ENCODE measurements at regions of chr20 and their contacts with region 1.

Region 1: DNA sequence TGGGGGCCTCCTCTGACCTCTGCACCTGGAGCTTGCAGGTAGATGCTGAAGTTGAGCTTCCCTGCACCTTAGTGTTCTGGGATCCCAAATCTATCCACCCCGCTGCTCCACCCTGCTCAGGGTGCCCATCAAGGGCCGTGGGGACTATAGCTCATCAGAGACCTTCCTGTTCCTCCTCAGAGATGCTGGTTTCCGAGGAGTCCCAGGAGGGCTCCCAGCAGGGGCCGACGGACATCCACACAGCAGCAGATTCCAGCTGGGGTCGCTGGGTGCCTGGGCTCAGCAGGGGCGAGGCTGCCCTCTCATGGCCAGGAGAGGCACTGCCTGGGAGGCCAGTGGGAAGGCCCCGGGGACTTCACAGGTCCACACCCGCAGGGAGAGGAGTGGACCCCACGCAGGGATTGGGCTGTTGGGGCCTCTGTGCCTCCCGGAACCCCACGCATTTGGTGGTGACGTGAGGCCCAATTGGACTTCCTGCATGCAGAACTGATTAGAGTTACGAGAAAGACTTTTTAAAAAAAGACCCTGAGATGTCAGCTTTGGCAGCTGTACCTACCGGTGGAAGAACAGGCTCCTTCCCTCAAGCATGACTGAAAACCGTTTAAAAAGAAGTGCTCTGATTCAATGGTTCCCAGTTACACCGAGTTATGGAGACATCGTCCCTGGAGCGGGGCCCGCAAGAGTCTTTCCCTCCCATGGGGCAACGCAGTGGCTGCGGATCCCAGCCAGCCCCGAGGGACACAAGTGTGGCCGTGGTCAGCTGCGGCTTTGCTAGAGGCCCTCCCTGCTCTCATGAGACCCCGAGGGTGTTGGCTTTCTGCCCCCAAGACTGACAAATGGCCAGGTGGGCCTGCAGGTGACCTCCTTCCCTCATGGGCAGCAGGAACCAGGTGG is 25.3 kb upstream of the SLCO4A1 start:
- DNase-seq: peak; percentile 92
- H3K4me3 Mint-ChIP-seq: peak overlapping the region; percentile 46
- H3K27ac Mint-ChIP-seq: peak overlapping the region; percentile 94
- H3K4me1 Mint-ChIP-seq: peaks cover 30% of the 10 kb centered on the region
- H3K27me3 Mint-ChIP-seq: peaks cover 8% of the 10 kb centered on the region

Region 2: GRCh38 chr20:62407221-62407992 is 209.6 kb before region 1 on chr20 and contains the start of gene CABLES2:
- intact Hi-C with region 1: loop called (anchors 5 kb)
- DNase-seq: peak; percentile 98
- H3K4me3 Mint-ChIP-seq: peak within 1 kb of the TSS; percentile 87
- H3K27ac Mint-ChIP-seq: peak within 1 kb of the TSS; percentile 89
- H3K4me1 Mint-ChIP-seq: peaks cover 24% of the 10 kb centered on the region
- H3K27me3 Mint-ChIP-seq: no peaks in the 10 kb centered on the region
- total RNA-seq, gene CABLES2: 13.1 and 13.5 TPM in 2 replicates

Region 3: GRCh38 chr20:62603021-62603906 is 13.7 kb before region 1 on chr20:
- intact Hi-C with region 1: loop called (anchors 1 kb)
- DNase-seq: peak; percentile 81
- H3K4me3 Mint-ChIP-seq: peak overlapping the region; percentile 79
- H3K27ac Mint-ChIP-seq: peak overlapping the region; percentile 64
- H3K4me1 Mint-ChIP-seq: peaks cover 27% of the 10 kb centered on the region
- H3K27me3 Mint-ChIP-seq: peaks cover 33% of the 10 kb centered on the region